HEK293 (cell line): ENCODE measurements at regions of chr5 and their contacts with region 1.

Region 1: DNA sequence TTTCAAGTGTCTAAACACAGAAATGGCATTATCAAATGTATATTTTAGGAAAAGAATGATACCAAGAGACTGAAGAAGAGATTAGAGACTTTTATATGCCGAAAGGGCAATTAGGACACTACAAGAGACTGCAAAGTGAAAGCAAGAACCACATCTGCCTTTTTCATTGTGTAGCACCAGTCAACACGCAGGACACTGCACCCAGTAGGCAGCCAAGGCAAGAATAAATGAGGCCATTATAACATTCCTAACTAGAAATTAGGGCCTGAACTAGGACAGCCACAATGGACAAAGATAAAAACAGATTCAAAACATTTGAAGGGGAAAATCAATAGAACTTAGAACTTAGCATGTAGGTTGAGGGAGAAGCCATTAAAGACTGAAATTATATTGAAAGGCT is 10.8 kb downstream of the CETN3 start:
- H3K4me3 ChIP-seq: no peak overlapping the region
- H3K27ac ChIP-seq: no peak overlapping the region
- H3K4me1 ChIP-seq: no peaks in the 10 kb centered on the region
- CTCF ChIP-seq: no peak

Region 2: DNA sequence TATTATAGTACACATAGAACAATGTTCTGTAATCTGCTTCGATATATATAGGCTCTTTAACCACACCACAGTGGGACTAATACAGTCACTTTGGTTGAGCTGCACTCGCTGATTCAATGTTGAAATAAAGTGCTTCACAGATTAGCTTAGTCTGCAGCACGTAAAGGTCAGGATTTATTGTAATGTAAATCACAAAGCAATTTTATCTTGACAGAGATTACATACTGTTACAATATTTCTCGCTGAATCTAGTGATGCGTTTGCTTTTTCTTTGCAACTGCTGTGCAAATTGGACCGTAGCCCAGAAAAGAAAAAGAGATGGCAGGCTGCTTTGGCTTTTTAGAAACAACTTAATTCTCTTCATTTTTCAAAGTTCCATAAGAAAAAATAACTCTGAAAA is 42.1 kb before region 1 on chr5:
- CTCF ChIA-PET with region 1: no interaction called
- POLR2A ChIA-PET with region 1: no interaction called
- H3K4me3 ChIP-seq: no peak overlapping the region
- H3K27ac ChIP-seq: no peak overlapping the region
- H3K4me1 ChIP-seq: peaks cover 7% of the 10 kb centered on the region
- CTCF ChIP-seq: no peak

Region 3: GRCh38 chr5:90386099-90386710 is 12.5 kb before region 1 on chr5:
- CTCF ChIA-PET with region 1: interaction called, 10 read pairs
- POLR2A ChIA-PET with region 1: no interaction called
- H3K4me3 ChIP-seq: no peak overlapping the region
- H3K27ac ChIP-seq: no peak overlapping the region
- H3K4me1 ChIP-seq: no peaks in the 10 kb centered on the region
- CTCF ChIP-seq: no peak

Region 4: DNA sequence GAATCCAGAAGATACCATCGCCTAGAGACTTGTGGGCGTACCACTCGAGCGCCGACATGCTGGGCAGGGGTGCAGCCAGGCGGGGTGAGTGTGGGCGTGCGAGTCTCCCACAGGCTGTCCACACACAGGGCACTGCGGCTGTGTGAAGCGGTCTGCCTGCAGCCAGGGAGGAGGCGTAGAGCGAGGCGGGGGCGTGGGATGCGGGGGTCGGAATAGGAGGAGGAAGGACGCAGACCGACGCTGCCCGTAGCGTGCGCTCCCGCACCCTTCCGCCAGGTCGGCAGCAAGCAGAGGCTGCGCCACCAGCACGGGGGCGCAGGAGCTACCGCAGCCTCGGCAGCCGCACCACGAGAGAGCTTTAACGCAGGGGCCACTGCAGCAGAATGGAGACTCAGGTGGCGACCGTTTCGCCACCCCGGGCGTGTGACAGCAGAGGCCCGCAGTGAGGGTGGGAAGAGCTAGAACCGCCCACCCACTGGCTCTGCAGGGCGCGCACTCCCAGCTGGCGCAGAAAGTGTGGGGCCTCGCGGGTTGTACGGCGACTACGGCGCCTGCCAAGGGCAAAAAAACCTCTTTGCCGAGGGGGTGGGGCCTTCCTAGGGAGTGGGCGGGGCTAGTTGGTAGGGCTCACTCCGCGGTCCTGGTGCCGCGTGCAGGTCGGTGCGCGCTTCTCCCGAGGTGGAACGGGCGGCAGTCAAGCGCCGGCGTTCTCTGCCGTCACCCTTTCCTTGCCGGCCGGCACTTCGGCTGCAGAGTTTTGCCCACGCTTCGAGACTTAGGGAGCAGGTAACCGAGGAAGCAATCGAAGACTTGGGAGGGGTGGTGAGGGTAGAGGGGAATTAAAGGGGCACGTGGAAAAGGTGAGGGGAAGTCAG is 75.7 kb after region 1 on chr5 and contains the starts of genes MBLAC2 and POLR3G:
- CTCF ChIA-PET with region 1: no interaction called
- POLR2A ChIA-PET with region 1: no interaction called
- H3K4me3 ChIP-seq: peak within 1 kb of the TSS; percentile 73
- H3K27ac ChIP-seq: peak within 1 kb of the TSS; percentile 76
- H3K4me1 ChIP-seq: no peaks in the 10 kb centered on the region
- CTCF ChIP-seq: peak; percentile 99

Region 5: DNA sequence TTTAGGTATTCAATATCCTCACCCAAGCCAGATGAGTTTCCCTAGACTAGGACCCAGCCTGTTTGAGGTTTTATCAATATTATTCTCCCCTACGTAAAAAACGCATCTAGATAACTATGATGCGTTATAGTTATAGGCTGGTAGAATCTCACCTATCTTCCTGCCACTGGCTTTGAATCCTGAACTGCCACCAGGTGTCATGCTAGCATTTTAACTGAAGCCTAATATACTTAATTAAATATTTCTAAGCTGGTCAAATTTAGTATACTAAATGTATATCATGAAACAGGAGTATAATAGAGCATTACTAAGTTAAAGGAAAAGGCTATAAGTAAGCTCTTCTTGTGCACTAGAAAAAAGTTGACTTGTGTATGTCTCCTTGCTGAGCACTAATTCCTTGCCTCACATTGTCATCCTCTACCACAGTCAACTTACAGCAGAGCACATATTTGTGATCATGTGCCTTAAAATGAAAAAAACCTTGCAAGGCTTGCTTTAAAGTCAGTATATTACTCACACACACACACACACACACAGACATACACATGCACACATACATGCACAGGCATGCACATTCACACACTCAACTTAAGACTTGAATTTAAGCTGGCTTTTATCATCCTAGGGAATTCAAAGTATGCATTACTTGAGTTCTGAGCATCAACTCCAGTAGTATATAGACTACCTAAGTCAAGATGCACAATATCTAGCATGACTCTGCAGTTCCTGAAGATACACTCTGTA is 463.3 kb after region 1 on chr5:
- CTCF ChIA-PET with region 1: no interaction called
- POLR2A ChIA-PET with region 1: no interaction called
- H3K4me3 ChIP-seq: no peak overlapping the region
- H3K27ac ChIP-seq: no peak overlapping the region
- H3K4me1 ChIP-seq: no peaks in the 10 kb centered on the region
- CTCF ChIP-seq: no peak